ENCODE measurements at regions of chr5 and their contacts with region 1.

Region 1: DNA sequence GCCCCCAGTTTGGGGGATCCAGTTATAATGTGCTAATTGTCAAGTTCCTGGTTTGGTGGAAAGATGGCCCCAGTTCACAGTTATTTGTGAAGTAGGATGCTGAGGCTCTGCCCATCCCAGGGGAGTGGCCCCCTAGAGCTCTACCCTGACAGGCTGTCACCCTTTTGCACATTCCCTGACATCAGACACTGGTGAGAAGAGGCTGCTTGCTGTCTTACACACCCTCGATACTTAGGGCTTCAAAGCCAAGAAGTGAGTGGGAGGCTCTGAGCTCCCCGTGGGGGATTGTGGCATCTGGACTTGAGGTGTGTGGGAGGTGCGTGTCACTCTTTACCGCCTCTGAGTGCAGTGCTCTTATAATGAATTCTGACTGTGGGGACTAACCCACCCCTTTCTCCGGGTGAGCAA is 168.5 kb downstream of the DOCK2 start:
- DNase-seq: peak; percentile 20 to 47 (median 41)
- ATAC-seq: peak; percentile 16; the same call in 2 of the 3 replicates
- H3K4me3 ChIP-seq: no peak overlapping the region
- H3K27ac ChIP-seq: no peak overlapping the region
- H3K4me1 ChIP-seq: peaks cover 0 to 16% of the 10 kb centered on the region in 2 experiments; a peak in 4 of 5 replicates
- H3K27me3 ChIP-seq: no peaks in the 10 kb centered on the region
- CTCF ChIP-seq: no peak
- EP300 ChIP-seq: no peak
- POLR2A ChIP-seq: no peak
- RAD21 ChIP-seq: no peak

Region 2: DNA sequence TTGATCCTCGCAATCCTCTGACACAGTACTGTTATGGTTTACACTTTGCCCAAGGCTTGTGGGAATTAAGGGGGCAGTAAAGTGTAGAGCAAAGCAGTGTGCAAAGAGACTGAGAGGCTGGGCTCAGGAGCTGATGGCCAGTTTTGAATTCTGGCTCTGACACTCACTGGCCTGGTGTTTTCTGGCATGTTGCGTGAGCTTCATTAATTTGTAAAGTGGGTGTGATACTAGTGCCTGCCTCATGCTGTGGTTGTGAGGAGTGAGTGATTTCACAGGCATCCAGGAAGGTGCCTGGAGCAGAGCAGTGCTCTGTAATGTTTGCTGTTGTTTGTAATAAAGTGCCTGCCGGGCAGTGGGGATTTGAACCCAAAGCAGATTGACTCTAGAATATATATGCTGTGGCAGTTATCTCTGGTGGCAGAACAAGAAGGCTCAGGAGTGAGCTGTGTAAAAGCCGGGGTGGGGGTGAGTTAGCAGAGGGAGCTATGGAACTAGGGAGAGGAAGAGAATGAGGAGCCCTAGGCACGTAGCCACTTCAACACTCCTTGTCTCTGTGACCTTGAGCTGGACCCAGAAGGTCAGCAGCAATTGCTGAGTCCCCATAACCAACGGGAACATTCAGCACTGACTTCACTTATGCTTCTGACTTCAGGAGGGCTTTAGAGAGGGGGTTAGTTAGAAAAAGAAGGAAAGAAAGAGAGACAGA is 59.9 kb before region 1 on chr5:
- CTCF ChIA-PET with region 1: no interaction called
- POLR2A ChIA-PET with region 1: no interaction called
- in situ Hi-C with region 1: no loop called
- intact Hi-C with region 1: loop called (anchors 1 kb)
- DNase-seq: peak; percentile 24 to 50 (median 38)
- ATAC-seq: peak; percentile 57
- H3K4me3 ChIP-seq: no peak overlapping the region
- H3K27ac ChIP-seq: peak overlapping the region; percentile 87
- H3K4me1 ChIP-seq: peaks cover 14 to 38% of the 10 kb centered on the region in 2 experiments; a peak in 4 of 5 replicates
- H3K27me3 ChIP-seq: no peaks in the 10 kb centered on the region
- CTCF ChIP-seq: no peak
- EP300 ChIP-seq: no peak
- POLR2A ChIP-seq: no peak
- RAD21 ChIP-seq: no peak

Region 3: GRCh38 chr5:169956756-169957155 is 151.2 kb after region 1 on chr5:
- CTCF ChIA-PET with region 1: no interaction called
- POLR2A ChIA-PET with region 1: no interaction called
- in situ Hi-C with region 1: no loop called
- intact Hi-C with region 1: no loop called
- DNase-seq: no peak
- ATAC-seq: no peak
- H3K4me3 ChIP-seq: no peak overlapping the region
- H3K27ac ChIP-seq: no peak overlapping the region
- H3K4me1 ChIP-seq: no peaks in the 10 kb centered on the region
- H3K27me3 ChIP-seq: no peaks in the 10 kb centered on the region
- CTCF ChIP-seq: no peak
- EP300 ChIP-seq: no peak
- POLR2A ChIP-seq: no peak
- RAD21 ChIP-seq: no peak

Region 4: DNA sequence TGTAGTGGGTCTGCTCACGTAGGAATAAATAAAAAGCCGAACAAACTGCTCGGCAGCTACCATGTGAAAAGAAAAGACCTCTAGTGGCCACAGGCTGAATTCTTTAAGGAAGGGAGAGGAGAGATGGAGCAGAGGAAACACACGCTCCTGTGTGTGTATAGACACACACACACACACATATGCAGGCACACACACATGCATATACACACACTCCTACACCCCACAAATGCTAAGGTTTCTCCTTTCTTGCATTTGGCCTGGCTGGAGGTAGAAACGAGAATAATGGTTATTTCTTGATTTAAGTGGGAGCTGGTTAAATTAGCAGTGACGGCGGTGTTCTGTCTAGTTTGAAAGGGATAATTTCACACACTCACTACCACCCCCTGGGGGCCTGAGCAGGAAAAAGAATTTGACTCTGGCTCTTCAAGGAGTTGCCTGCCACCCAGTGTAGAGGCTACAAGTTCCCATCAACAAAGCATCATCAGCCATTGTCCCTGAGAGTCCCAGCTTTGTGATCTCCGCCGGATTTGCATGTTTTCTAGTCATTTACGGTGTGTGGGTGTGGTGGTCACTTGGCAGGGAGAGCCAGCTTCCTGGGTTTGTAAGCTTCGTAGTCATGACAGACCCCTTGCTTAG is 175.0 kb after region 1 on chr5 and contains the start of gene INSYN2B:
- CTCF ChIA-PET with region 1: interaction called, 3 read pairs
- POLR2A ChIA-PET with region 1: no interaction called
- in situ Hi-C with region 1: no loop called
- intact Hi-C with region 1: loop called (anchors 10 kb)
- DNase-seq: peak; percentile 65 to 71 (median 68)
- ATAC-seq: peak; percentile 97
- H3K4me3 ChIP-seq: no peak within 1 kb of the TSS
- H3K27ac ChIP-seq: no peak within 1 kb of the TSS
- H3K4me1 ChIP-seq: no peaks in the 10 kb centered on the region; a peak in 1 of 5 replicates
- H3K27me3 ChIP-seq: no peaks in the 10 kb centered on the region; a peak in 1 of 5 replicates
- CTCF ChIP-seq: peak; percentile 67 to 98 (median 84)
- EP300 ChIP-seq: no peak
- POLR2A ChIP-seq: no peak
- RAD21 ChIP-seq: peak; percentile 42 to 75
- polyA plus RNA-seq, gene INSYN2B: not detected

Measured in K562 (cell line).